Activated naive CD4-positive, alpha-beta T cell treated with anti-CD3 and anti-CD28 coated beads for 36 hours (primary cell): ENCODE measurements at regions of chr12 and their contacts with region 1.

Region 1: DNA sequence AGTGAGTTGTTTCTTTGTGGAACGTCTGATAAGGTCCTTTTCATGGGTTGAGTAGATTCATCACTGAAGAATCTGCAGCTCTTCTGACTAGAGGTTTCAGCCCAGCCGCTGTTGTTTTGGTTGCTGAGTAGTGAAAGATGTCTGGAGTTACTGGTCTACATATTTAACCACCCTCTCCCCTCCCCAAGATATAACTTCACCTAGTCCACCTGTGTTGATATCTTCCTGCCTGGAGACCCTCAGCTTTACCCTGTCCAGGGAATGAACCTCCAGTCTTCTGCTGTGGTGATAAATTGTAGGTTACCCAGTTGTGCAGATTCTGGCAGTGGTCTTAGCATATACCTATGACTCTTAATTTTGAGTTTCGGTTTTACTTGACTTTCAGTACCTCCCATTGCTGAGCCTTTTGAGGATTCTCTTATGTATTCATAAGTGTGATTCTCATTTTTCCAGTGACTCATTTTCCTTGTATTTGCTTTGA is 62.9 kb downstream of the CCDC91 start:
- DNase-seq: peak; percentile 60
- H3K4me3 Mint-ChIP-seq: peak overlapping the region; percentile 30
- H3K27ac Mint-ChIP-seq: peak overlapping the region; percentile 79
- H3K4me1 Mint-ChIP-seq: peaks cover 63% of the 10 kb centered on the region
- H3K27me3 Mint-ChIP-seq: no peaks in the 10 kb centered on the region

Region 2: DNA sequence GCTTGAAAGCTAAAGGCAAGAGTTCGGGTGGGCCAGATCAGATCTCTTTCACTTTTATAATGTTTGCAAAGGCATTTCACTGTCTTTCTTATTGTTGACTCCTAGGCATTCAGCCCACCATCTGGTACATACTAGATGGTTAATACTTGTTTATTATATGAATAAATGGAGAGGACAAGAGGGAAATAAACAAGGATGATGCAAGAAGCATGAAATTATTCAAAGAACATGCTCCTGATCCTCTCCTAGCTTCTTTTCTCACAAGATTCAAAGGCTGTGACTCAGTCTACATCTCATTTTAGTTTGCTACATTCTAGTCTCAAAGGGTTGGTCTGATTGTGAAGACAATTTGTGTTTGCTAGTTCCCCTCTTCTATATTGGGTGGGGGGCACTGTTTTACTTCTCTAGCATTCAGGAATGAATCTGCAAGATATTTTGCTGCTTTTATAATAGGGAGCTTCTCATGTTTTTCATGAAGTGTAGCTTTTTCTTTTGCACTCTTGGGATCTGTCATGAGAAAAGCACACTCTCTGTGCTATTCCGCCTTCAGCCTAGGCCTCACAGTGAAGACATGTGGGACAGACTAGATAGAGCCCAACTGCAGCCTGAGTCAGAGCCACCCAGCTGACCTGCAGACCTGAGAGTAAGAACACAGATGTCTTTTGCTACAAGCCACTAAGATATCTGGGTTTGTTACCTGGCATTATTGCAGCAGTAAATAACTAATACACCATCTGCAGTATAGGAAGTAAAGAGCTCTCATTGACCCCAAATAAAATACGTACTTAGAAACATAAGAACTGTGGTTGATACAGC is 346.3 kb before region 1 on chr12:
- CTCF ChIA-PET with region 1: no interaction called
- intact Hi-C with region 1: no loop called
- DNase-seq: no peak
- H3K4me3 Mint-ChIP-seq: no peak overlapping the region
- H3K27ac Mint-ChIP-seq: no peak overlapping the region
- H3K4me1 Mint-ChIP-seq: no peaks in the 10 kb centered on the region
- H3K27me3 Mint-ChIP-seq: peaks cover 4% of the 10 kb centered on the region

Region 3: DNA sequence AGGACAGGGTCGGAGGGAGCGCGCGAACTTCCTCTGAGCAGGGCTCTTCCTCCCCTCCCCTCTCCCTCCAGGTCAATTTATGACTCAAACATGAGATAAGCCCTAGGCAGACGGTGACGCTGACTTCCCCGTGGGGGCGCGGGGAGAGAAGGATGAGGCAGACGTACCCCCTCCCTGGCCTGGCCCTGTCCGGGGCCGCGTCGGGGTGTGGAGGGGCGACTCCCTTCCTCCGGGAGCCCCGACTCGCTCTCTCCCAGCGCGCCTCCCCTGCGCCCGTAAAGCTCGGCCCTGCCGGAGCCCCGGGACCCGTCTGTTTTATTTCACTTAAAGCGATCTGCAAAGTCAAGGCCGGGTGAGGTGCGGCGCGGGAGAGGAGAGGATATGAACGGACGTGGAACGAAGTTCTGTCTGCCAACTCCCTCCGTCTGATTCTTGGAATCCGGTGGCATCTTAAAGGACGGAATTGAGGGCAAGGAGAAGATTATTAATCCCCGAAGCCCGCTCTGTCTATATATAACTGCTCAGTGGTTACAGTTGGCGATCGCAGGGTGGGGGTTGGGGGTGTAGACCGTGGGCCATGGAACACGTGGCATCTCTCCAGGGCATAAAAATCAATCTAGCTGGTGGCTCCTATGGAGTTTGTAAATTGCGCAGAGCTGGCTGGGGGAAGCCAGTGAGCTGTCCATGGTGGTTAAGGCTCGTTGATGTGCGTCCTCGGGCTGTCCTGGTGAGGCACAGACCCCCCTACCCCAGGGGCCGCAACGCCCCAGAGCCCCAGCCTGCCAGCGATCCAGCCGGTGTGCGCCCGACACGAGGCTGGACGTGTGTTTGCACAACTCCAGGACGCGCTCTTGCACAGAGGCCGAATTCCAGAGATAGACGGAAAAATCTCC is 277.7 kb before region 1 on chr12:
- CTCF ChIA-PET with region 1: no interaction called
- intact Hi-C with region 1: loop called (anchors 1 kb)
- DNase-seq: peak; percentile 29
- H3K4me3 Mint-ChIP-seq: peak overlapping the region; percentile 53
- H3K27ac Mint-ChIP-seq: no peak overlapping the region
- H3K4me1 Mint-ChIP-seq: peaks cover 20% of the 10 kb centered on the region
- H3K27me3 Mint-ChIP-seq: peaks cover 82% of the 10 kb centered on the region

Region 4: DNA sequence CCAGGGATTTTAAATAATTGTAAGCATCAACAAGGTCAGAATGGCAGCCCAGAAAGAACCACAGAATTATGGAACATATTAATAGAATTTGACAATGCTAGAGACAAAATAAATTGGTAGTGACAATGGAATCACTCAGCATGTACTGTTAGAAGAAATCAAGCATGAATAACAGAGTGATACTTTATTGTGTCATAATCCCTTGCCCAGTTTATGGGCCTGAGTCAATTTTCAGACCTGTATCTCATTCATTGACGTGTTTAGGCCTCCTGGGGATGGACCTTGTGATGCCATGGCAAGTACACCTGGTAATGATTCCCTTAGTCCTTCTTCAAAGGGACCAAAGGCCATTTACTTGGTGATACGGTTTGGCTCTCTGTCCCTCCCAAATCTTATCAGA is 75.7 kb before region 1 on chr12:
- CTCF ChIA-PET with region 1: no interaction called
- intact Hi-C with region 1: no loop called
- DNase-seq: no peak
- H3K4me3 Mint-ChIP-seq: no peak overlapping the region
- H3K27ac Mint-ChIP-seq: no peak overlapping the region
- H3K4me1 Mint-ChIP-seq: no peaks in the 10 kb centered on the region
- H3K27me3 Mint-ChIP-seq: no peaks in the 10 kb centered on the region

Region 5: DNA sequence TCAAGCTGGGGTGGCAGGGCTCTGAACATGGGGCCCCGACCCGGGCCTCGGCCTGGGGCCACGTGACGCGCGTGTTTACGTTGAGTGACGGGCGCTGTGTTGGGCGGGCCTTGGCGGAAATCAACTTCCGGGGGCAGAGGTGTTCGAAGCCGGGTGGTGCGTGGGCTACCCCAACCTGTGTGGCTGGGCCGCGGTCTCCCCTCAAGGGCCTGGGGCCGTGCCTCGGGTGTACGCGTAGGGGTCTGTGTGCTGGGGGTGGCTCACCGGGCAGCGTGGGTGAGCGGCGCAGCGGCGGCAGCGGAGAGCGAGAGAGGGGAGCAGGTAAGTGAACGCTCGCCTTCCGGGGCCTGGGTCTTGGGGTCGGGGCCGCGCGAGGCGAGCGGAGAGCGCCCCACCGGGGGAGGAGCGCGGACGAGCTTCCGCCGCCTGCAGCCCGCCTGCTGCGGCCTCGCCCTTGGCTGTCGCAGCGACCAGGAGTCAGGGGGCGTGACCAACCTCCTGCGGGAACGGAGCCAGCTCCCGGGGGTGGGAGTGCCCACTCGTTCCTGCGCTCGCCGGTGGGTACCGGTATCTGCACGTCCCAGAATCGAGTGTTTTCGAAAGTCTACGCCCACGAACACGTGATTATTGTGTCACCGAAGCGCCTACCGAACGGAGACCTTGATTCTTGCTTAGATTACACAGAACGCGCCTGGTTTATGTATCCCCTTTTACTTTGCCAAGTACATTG is 62.7 kb before region 1 on chr12 and contains the start of gene CCDC91:
- CTCF ChIA-PET with region 1: interaction called, 5 read pairs
- intact Hi-C with region 1: loop called (anchors 1 kb)
- DNase-seq: peak; percentile 91
- H3K4me3 Mint-ChIP-seq: peak within 1 kb of the TSS; percentile 96
- H3K27ac Mint-ChIP-seq: peak within 1 kb of the TSS; percentile 97
- H3K4me1 Mint-ChIP-seq: peaks cover 57% of the 10 kb centered on the region
- H3K27me3 Mint-ChIP-seq: no peaks in the 10 kb centered on the region
- total RNA-seq, gene CCDC91: 15.3 to 16.1 TPM

Region 6: GRCh38 chr12:28232211-28232928 is 20.8 kb before region 1 on chr12:
- CTCF ChIA-PET with region 1: interaction called, 3 read pairs
- intact Hi-C with region 1: loop called (anchors 1 kb)
- DNase-seq: no peak
- H3K4me3 Mint-ChIP-seq: no peak overlapping the region
- H3K27ac Mint-ChIP-seq: no peak overlapping the region
- H3K4me1 Mint-ChIP-seq: peaks cover 51% of the 10 kb centered on the region
- H3K27me3 Mint-ChIP-seq: no peaks in the 10 kb centered on the region

Region 7: GRCh38 chr12:29082522-29082921 is 829.3 kb after region 1 on chr12:
- CTCF ChIA-PET with region 1: no interaction called
- intact Hi-C with region 1: loop called (anchors 1 kb)
- DNase-seq: no peak
- H3K4me3 Mint-ChIP-seq: no peak overlapping the region
- H3K27ac Mint-ChIP-seq: no peak overlapping the region
- H3K4me1 Mint-ChIP-seq: peaks cover 7% of the 10 kb centered on the region
- H3K27me3 Mint-ChIP-seq: peaks cover 9% of the 10 kb centered on the region